ENCODE measurements at regions of chr2 and their contacts with region 1.

Region 1: DNA sequence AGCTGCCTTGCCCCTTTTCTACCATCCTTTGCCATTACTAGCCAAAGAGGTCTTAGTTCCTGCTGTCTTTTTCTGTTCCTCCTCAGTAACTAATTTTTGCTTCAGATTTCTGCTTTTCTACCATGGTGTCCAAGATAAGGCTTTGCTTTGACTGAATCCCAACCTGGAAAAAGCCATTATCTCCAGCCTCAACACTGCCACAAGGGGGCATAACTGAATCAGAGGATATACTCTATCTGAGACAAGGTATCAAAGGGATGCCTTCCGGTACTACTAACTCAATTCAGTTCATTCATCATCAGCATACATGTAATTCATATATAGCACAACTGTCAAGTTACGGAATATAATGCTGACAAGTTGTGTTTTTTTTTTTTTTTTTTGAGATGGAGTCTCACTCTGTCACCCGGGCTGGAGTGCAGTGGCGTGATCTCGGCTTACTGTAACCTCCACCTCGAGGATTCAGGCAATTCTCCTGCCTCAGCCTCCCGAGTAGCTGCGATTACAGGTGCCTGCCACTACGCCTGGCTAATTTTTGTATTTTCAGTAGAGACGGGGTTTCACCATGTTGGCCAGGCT is 11.4 kb downstream of the OSGEPL1 start:
- DNase-seq: peak in 1 of 2 donors; percentile 70
- ATAC-seq: peak; percentile 50 to 66 (median 65)
- H3K4me3 ChIP-seq: no peak overlapping the region
- H3K4me3 Mint-ChIP-seq: no peak overlapping the region
- H3K27ac ChIP-seq: no peak overlapping the region
- H3K27ac Mint-ChIP-seq: no peak overlapping the region
- H3K4me1 ChIP-seq: no peaks in the 10 kb centered on the region
- H3K4me1 Mint-ChIP-seq: peaks cover 0 to 4% of the 10 kb centered on the region in 2 donors
- H3K27me3 ChIP-seq: no peaks in the 10 kb centered on the region
- H3K27me3 Mint-ChIP-seq: no peaks in the 10 kb centered on the region
- CTCF ChIP-seq: peak; percentile 54

Region 2: GRCh38 chr2:189641590-189641989 is 109.6 kb before region 1 on chr2:
- intact Hi-C with region 1: no loop called
- DNase-seq: no peak
- ATAC-seq: no peak
- H3K4me3 ChIP-seq: no peak overlapping the region
- H3K4me3 Mint-ChIP-seq: no peak overlapping the region
- H3K27ac ChIP-seq: no peak overlapping the region
- H3K27ac Mint-ChIP-seq: no peak overlapping the region
- H3K4me1 ChIP-seq: no peaks in the 10 kb centered on the region
- H3K4me1 Mint-ChIP-seq: no peaks in the 10 kb centered on the region
- H3K27me3 ChIP-seq: no peaks in the 10 kb centered on the region
- H3K27me3 Mint-ChIP-seq: peaks cover 0 to 7% of the 10 kb centered on the region in 2 donors
- CTCF ChIP-seq: no peak

Region 3: GRCh38 chr2:189685540-189686229 is 65.5 kb before region 1 on chr2:
- intact Hi-C with region 1: no loop called
- DNase-seq: peak in 1 of 2 donors; percentile 36
- ATAC-seq: peak in 1 of 3 donors; percentile 48
- H3K4me3 ChIP-seq: no peak overlapping the region
- H3K4me3 Mint-ChIP-seq: no peak overlapping the region
- H3K27ac ChIP-seq: no peak overlapping the region
- H3K27ac Mint-ChIP-seq: peak overlapping the region in 1 of 2 donors; percentile 33
- H3K4me1 ChIP-seq: peaks cover 5% of the 10 kb centered on the region
- H3K4me1 Mint-ChIP-seq: peaks cover 11% of the 10 kb centered on the region in 2 donors
- H3K27me3 ChIP-seq: no peaks in the 10 kb centered on the region
- H3K27me3 Mint-ChIP-seq: no peaks in the 10 kb centered on the region
- CTCF ChIP-seq: no peak

Region 4: DNA sequence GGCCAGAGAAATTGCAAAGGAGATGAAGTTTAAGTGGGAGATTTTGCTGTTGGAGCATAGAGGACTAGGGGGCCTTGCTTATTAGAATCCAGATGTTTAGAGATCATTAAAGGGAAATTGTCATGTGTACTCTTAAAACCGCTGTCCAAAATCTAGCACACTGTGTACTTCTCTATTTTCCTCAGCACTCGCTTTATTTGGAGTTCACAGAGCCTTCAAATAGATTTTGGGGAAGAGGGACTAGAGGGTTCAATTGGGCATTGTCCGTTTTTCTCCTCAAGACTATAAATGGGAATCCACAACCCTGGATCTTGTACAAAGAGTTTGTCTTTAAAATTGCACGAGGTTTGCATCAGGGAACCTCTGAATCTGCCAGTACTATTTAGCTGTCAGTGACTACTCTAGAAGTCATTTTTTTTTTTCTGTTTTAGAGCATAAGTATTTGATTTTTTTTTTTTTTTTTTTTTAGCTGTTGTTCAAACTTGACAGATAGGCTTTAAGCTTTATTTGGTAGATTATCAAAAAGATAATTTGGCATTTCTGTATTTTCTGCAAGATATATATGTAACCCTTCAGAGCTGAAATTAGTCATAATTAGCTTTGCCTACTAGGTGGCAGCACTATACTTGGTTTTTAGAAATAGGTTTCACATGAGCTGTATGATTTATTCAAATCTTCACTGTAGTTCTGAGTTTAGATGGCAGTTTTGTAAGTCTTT is 47.3 kb after region 1 on chr2:
- intact Hi-C with region 1: loop called (anchors 5 kb)
- DNase-seq: peak in 1 of 2 donors; percentile 22
- ATAC-seq: peak; percentile 41 to 46 (median 41)
- H3K4me3 ChIP-seq: no peak overlapping the region
- H3K4me3 Mint-ChIP-seq: no peak overlapping the region
- H3K27ac ChIP-seq: no peak overlapping the region
- H3K27ac Mint-ChIP-seq: no peak overlapping the region
- H3K4me1 ChIP-seq: no peaks in the 10 kb centered on the region
- H3K4me1 Mint-ChIP-seq: peaks cover 4 to 6% of the 10 kb centered on the region in 2 donors
- H3K27me3 ChIP-seq: no peaks in the 10 kb centered on the region
- H3K27me3 Mint-ChIP-seq: no peaks in the 10 kb centered on the region
- CTCF ChIP-seq: peak; percentile 47